CD4-positive, alpha-beta T cell (primary cell): ENCODE measurements at regions of chr1 and their contacts with region 1.

Region 1: GRCh38 chr1:32335790-32336590 is at the start of gene MARCKSL1:
- DNase-seq: peak; percentile 79 to 94 (median 86)
- ATAC-seq: peak; percentile 66
- H3K4me3 ChIP-seq: peak within 1 kb of the TSS; percentile 59
- H3K4me3 Mint-ChIP-seq: peak within 1 kb of the TSS; percentile 94
- H3K27ac ChIP-seq: peak within 1 kb of the TSS in 1 of 2 donors; percentile 52
- H3K27ac Mint-ChIP-seq: peak within 1 kb of the TSS; percentile 87
- H3K4me1 ChIP-seq: peaks cover 49% of the 10 kb centered on the region
- H3K4me1 Mint-ChIP-seq: peaks cover 50% of the 10 kb centered on the region
- H3K27me3 ChIP-seq: no peaks in the 10 kb centered on the region
- H3K27me3 Mint-ChIP-seq: no peaks in the 10 kb centered on the region
- CTCF ChIP-seq: no peak
- total RNA-seq, gene MARCKSL1: 23.4 to 23.6 TPM

Region 2: DNA sequence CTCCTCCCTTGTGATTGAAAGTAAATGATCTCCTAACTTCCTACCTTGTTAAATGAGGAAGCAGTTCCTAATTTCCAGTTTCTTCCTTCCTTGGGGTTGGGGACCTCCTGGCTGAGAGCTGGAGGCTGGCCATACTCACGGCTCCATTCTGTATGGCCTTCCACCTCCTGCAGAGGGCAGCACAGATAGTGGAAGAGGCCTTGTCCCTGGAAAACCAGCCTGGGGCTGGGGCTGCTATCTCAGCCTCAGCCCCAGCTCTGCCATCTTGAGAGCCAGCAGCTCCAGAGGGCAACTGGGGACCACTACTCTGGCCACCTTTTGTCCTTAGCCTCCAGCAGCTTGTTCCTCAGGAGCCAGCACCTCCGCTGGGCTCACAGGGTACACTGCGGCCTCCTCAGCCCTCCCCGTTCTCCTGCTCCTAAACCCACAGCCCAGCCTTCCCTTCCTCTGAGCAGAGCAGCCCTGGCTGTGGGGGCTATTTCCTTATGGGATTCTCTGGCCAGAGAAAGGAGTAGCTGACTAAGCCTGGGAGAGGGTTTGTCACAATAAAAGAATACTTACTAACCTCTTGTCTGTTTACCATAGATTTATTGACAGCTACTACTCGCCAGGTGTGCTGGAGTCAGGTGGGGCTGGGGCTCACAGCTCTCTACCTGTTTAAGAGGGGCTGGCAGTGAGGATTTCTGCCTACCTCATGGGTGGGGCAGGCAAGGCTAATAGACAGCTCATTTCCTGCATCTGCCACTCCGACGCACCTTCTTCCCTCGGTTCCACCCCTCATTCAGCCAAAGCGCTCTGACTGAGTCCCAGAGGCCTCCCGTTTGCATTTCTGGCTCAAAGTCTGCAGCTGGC is 120.1 kb before region 1 on chr1:
- CTCF ChIA-PET with region 1: interaction called, 12 read pairs
- POLR2A ChIA-PET with region 1: interaction called, 20 read pairs
- intact Hi-C with region 1: no loop called
- DNase-seq: peak; percentile 33 to 81 (median 50)
- ATAC-seq: peak; percentile 96
- H3K4me3 ChIP-seq: no peak overlapping the region
- H3K4me3 Mint-ChIP-seq: no peak overlapping the region
- H3K27ac ChIP-seq: no peak overlapping the region
- H3K27ac Mint-ChIP-seq: peak overlapping the region; percentile 62
- H3K4me1 ChIP-seq: peaks cover 16% of the 10 kb centered on the region
- H3K4me1 Mint-ChIP-seq: peaks cover 13% of the 10 kb centered on the region
- H3K27me3 ChIP-seq: no peaks in the 10 kb centered on the region
- H3K27me3 Mint-ChIP-seq: no peaks in the 10 kb centered on the region
- CTCF ChIP-seq: peak; percentile 85

Region 3: DNA sequence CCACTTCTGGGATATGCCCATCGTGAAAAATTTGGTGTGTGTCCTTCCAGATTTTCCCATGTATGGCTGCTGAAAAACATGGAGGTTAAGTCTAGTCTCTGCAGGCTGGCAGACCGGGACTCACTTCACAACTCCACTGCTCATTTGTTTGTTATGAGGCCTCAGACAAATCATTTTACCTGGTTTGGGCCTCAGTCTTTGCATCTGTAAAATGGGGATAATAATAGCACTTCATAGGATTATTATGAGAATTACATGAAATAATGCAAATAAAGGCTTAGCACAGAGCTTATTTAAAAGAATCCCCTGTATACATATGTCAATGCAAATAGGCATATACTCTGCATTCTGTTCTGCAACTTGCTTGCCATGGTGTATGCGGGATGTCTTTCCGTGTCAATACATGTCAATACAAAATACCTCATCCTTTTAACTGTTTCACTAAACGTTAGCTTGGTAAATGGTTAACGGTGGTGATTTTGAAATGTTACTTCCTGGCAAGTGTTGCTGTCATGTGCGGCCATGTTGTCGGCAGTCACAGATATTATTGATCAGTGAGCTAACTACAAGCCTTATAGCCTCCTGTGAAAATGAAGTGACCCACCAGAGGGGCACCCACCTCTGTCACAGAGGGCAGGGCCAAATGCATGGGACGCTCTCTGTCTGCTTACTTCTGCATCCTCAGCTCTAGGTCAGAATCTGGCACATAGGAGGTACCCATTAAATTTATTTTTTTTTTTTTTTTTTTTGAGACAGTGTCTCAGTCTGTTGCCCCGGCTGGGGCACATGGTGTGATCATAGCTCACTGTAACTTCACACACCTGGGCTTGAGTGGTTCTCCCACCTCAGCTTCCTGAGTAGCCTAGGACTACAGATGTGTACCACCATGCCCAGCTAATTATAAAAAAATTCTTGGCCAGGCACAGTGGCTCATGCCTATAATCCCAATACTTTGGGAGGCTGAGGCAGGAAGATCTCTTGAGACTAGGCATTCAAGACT is 80.6 kb before region 1 on chr1:
- CTCF ChIA-PET with region 1: interaction called, 9 read pairs
- POLR2A ChIA-PET with region 1: interaction called, 64 read pairs
- intact Hi-C with region 1: loop called in 1 of 2 experiments (anchors 5 kb)
- DNase-seq: peak in 5 of 14 experiments; percentile 19 to 60 (median 53)
- ATAC-seq: peak; percentile 39
- H3K4me3 ChIP-seq: peak overlapping the region; percentile 71
- H3K4me3 Mint-ChIP-seq: peak overlapping the region; percentile 91
- H3K27ac ChIP-seq: peak overlapping the region; percentile 37 to 94
- H3K27ac Mint-ChIP-seq: peak overlapping the region; percentile 99
- H3K4me1 ChIP-seq: peaks cover 79% of the 10 kb centered on the region
- H3K4me1 Mint-ChIP-seq: peaks cover 57% of the 10 kb centered on the region
- H3K27me3 ChIP-seq: no peaks in the 10 kb centered on the region
- H3K27me3 Mint-ChIP-seq: no peaks in the 10 kb centered on the region
- CTCF ChIP-seq: no peak

Region 4: DNA sequence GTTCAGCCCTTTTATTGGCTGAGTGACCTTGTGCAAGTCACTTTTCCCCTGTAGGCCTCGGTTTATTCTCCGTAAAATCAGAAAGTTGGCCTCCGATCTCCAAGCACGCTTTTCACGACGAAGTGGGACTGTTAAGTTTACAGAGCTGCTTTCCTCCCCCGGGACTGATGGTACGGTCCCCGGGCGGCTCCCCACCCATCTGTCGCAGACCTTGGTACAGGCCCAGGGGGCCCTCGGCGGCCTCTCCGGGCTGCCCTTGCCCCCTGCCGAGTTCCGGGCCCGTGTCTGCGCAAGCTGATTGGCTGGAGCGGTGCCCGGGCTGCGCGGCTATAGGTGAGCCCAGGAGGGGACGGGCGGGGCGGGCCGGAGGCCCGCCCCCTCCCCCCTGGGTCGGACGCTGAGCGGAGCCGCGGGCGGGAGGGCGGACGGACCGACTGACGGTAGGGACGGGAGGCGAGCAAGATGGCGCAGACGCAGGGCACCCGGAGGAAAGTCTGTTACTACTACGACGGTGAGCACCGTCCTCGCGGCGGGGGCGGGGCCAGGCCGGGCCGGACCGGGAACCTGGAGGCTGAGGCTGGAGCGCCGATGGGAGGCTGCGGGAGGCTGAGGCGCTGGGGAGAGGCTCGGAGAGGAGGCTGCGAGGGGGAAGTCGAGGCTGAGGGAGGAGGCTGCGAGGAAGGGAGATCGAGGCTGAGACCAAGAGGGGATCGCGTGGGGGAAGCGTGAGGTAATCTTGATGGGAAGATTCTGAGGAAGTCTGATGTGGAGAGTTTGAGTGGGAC is 44.1 kb before region 1 on chr1 and contains the start of gene HDAC1:
- CTCF ChIA-PET with region 1: interaction called, 6 read pairs
- POLR2A ChIA-PET with region 1: interaction called, 53 read pairs
- intact Hi-C with region 1: loop called (anchors 1 to 2 kb)
- DNase-seq: peak; percentile 93 to 98 (median 96)
- ATAC-seq: peak; percentile 91
- H3K4me3 ChIP-seq: peak within 1 kb of the TSS; percentile 98
- H3K4me3 Mint-ChIP-seq: peak within 1 kb of the TSS; percentile 100
- H3K27ac ChIP-seq: peak within 1 kb of the TSS; percentile 81
- H3K27ac Mint-ChIP-seq: peak within 1 kb of the TSS; percentile 92
- H3K4me1 ChIP-seq: peaks cover 67% of the 10 kb centered on the region
- H3K4me1 Mint-ChIP-seq: peaks cover 54% of the 10 kb centered on the region
- H3K27me3 ChIP-seq: no peaks in the 10 kb centered on the region
- H3K27me3 Mint-ChIP-seq: no peaks in the 10 kb centered on the region
- CTCF ChIP-seq: no peak
- total RNA-seq, gene HDAC1: 56.9 to 61.0 TPM

Region 5: DNA sequence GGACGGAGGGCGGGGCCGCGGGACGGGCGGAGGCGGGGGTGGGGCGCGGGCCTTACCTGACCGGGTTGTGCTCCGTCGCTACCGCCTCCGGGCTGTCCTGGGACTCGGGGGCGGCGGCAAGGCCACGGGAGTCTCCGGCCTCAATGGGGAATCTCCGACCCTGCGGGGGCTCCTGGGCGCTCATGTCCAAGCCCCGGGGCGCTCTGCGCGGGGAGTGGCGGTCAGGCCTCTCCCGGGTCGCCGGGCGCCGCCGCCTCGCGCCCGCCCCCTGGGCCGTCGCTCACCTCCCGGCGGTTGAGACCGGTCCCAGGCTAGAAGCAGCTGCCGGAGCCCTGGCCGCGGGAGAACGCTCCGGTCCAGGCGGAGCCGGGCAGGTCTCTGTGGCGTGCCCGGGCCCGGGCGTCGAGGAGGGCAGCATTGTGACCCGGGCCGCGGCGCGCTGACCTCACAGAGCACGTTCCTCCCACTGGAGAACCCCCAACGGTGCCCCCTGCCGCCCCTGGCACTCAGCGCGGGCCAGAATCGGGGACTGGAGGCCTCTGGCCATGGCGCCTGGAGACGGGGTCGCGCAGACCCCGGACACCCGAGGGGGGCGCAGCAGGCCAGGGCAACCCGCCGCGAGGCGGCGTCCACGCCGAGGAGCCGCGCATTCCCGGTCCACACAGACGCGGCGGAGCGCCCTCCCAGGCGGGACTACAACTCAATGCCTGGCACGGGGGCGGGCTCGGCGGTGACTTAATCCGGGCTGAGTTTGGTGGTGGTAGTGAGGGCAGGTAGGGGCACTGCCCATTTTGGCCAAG is 25.9 kb after region 1 on chr1:
- CTCF ChIA-PET with region 1: interaction called, 3 read pairs
- POLR2A ChIA-PET with region 1: interaction called, 16 read pairs
- intact Hi-C with region 1: no loop called
- DNase-seq: peak in 8 of 14 experiments; percentile 21 to 64 (median 42)
- ATAC-seq: peak; percentile 39
- H3K4me3 ChIP-seq: no peak overlapping the region
- H3K4me3 Mint-ChIP-seq: peak overlapping the region; percentile 70
- H3K27ac ChIP-seq: no peak overlapping the region
- H3K27ac Mint-ChIP-seq: peak overlapping the region; percentile 59
- H3K4me1 ChIP-seq: peaks cover 31% of the 10 kb centered on the region
- H3K4me1 Mint-ChIP-seq: peaks cover 21% of the 10 kb centered on the region
- H3K27me3 ChIP-seq: peaks cover 0 to 3% of the 10 kb centered on the region in 2 experiments
- H3K27me3 Mint-ChIP-seq: peaks cover 5% of the 10 kb centered on the region
- CTCF ChIP-seq: peak; percentile 43

Region 6: GRCh38 chr1:32394141-32394889 is 58.3 kb after region 1 on chr1 and contains the start of gene BSDC1:
- CTCF ChIA-PET with region 1: interaction called, 5 read pairs
- POLR2A ChIA-PET with region 1: interaction called, 56 read pairs
- intact Hi-C with region 1: loop called in 1 of 2 experiments (anchors 1 kb)
- DNase-seq: peak; percentile 95 to 99 (median 98)
- ATAC-seq: peak; percentile 97
- H3K4me3 ChIP-seq: peak within 1 kb of the TSS; percentile 85
- H3K4me3 Mint-ChIP-seq: peak within 1 kb of the TSS; percentile 98
- H3K27ac ChIP-seq: peak within 1 kb of the TSS; percentile 92 to 96
- H3K27ac Mint-ChIP-seq: no peak within 1 kb of the TSS
- H3K4me1 ChIP-seq: peaks cover 40% of the 10 kb centered on the region
- H3K4me1 Mint-ChIP-seq: peaks cover 24% of the 10 kb centered on the region
- H3K27me3 ChIP-seq: no peaks in the 10 kb centered on the region
- H3K27me3 Mint-ChIP-seq: no peaks in the 10 kb centered on the region
- CTCF ChIP-seq: no peak
- total RNA-seq, gene BSDC1: 186 to 190 TPM